ENCODE measurements at regions of chr12 and their contacts with region 1.

Region 1: DNA sequence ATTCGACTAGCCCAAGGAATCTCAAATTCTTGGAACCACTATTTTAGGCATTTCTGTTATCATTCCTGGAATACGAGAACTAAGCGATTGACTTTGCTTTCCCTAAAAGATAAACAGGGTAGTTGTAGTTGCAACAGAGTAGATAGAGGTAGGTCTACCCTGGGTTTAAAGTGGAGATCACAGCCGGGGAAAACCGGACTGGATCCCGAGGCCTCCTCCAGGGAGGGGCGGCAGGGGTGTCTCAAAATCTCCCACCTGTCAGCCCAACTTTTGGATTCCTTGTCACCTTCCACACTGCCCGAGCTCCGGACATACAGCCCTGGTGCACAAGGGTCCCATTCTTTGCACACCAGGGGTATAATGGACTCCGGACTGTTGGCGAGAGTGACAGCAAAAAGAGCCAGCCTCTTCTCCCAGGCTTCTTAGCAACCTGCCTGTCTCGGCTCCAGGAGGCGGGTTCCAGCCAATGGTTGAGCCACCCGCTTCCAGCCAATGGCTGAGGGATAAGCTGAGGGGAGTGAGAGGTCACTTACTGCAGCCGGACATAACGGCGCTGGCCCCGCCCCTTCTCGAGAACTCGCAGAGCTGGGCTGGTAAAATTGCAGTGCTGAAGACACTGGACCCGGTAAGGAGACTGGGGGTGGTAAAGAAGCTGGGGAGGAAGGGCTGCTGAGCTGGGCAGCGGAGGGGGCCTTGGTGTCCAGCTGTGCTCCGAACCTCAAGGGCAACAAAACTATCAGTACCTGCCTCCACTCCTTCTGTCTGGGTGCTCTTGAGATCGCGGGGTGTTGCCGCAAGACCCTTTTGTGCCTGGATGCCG is at the start of gene SUOX:
- DNase-seq: peak; percentile 72
- H3K4me3 Mint-ChIP-seq: peak within 1 kb of the TSS; percentile 72
- H3K27ac Mint-ChIP-seq: peak within 1 kb of the TSS; percentile 36
- H3K4me1 Mint-ChIP-seq: peaks cover 20% of the 10 kb centered on the region
- H3K27me3 Mint-ChIP-seq: peaks cover 18% of the 10 kb centered on the region
- total RNA-seq, gene SUOX: 1.7 to 2.2 TPM

Region 2: DNA sequence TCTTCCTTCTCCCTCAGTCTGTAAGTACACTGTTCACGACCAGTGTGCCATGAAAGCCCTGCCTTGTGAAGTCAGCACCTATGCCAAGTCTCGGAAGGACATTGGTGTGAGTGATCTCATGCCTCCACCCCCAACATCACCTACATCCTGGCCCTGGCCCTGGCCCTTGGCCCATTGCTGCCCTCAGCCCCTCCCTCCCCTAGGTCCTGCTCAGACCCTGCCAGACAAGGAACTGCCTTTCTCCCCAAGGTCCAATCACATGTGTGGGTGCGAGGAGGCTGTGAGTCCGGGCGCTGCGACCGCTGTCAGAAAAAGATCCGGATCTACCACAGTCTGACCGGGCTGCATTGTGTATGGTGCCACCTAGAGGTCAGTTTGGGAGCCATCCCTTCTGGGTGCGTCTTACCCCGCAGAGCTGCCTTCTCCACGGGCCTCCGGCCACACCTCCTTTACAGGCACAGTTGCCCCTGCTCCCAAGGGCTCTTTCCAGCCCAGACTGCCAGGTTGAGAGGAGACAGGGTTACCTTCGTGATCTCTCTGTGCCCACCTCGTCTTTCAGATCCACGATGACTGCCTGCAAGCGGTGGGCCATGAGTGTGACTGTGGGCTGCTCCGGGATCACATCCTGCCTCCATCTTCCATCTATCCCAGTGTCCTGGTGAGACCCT is 56.7 kb before region 1 on chr12:
- CTCF ChIA-PET with region 1: interaction called, 10 read pairs
- intact Hi-C with region 1: no loop called
- DNase-seq: peak; percentile 94
- H3K4me3 Mint-ChIP-seq: no peak overlapping the region
- H3K27ac Mint-ChIP-seq: peak overlapping the region; percentile 74
- H3K4me1 Mint-ChIP-seq: peaks cover 72% of the 10 kb centered on the region
- H3K27me3 Mint-ChIP-seq: no peaks in the 10 kb centered on the region

Region 3: GRCh38 chr12:55982319-55982936 is 14.5 kb before region 1 on chr12:
- CTCF ChIA-PET with region 1: interaction called, 39 read pairs
- intact Hi-C with region 1: no loop called
- DNase-seq: no peak
- H3K4me3 Mint-ChIP-seq: no peak overlapping the region
- H3K27ac Mint-ChIP-seq: no peak overlapping the region
- H3K4me1 Mint-ChIP-seq: peaks cover 18% of the 10 kb centered on the region
- H3K27me3 Mint-ChIP-seq: no peaks in the 10 kb centered on the region

Region 4: DNA sequence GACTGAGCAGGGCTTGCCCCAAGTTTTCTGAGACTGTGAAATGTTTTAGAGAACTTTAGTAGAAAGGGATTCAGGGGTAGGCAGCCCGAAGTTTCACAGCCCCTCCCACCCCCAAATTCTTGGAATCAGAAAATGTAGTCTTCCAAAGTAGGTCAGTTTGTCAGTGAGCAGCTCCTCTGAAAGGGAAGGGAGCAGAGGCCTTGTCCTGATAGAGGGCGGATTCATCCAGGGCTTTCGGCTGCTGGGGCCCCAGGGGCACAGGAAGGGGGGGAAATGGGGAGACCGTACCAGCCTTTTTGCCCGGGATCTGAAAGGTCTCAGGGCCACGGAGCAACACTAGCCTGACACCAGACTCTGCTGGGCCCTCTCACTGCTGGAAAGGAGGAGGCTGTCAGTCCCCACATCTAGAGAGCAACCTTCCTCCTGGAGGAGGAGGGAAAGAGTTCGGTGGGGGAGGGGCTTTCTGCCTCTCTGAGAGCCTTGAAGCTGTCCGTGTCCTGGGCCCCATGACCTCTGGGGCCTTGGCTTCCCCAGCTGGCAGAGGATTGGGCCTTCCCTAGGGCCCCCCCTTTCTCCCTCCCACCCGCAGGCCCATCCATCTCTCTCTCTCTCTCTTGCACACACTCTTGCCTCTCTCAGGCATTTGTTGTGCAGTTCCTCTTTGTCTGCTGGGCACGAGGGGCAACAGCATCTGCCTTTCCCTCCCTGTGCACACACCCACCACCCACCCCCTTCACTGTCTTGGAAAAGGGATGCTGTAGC is 23.7 kb after region 1 on chr12 and contains the start of gene IKZF4:
- CTCF ChIA-PET with region 1: interaction called, 90 read pairs
- intact Hi-C with region 1: no loop called
- DNase-seq: peak; percentile 44
- H3K4me3 Mint-ChIP-seq: peak within 1 kb of the TSS; percentile 84
- H3K27ac Mint-ChIP-seq: peak within 1 kb of the TSS; percentile 80
- H3K4me1 Mint-ChIP-seq: peaks cover 30% of the 10 kb centered on the region
- H3K27me3 Mint-ChIP-seq: no peaks in the 10 kb centered on the region
- total RNA-seq, gene IKZF4: 7.5 to 8.2 TPM

Region 5: DNA sequence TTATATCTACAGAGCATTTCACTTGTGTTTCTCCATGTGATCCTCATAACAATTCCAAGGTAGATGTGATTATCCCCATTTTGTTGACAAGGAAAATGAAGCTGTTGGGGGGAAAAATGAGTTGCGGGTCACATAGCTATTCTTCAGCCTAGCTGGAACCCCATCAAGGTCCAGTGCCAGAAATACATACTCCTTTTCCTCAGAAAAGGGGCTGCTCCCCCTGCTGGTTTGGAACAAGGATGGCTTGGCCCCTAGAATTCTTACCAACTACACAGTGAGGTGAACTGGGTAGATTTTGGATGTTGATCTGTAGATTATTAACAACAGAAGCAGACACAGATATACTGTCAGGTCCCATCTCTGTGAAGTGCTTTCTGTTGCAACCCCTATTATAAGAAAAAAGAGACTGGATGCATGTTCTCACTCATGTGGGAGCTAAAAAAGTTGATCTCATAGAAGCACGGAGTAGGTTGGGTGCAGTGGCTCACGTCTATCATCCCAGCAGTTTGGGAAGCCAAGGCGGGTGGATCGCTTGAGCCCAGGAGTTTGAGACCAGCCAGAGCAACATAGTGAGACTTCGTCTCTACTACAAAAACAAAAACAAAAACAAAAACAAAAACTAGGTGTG is 32.9 kb after region 1 on chr12:
- CTCF ChIA-PET with region 1: interaction called, 90 read pairs
- intact Hi-C with region 1: loop called (anchors 1 kb)
- DNase-seq: peak; percentile 65
- H3K4me3 Mint-ChIP-seq: no peak overlapping the region
- H3K27ac Mint-ChIP-seq: no peak overlapping the region
- H3K4me1 Mint-ChIP-seq: peaks cover 24% of the 10 kb centered on the region
- H3K27me3 Mint-ChIP-seq: no peaks in the 10 kb centered on the region